ENCODE measurements at regions of chr9 and their contacts with region 1.

Region 1: GRCh38 chr9:112203536-112203935 is 28.4 kb upstream of the SUSD1 start:
- DNase-seq: no peak
- ATAC-seq: no peak
- H3K4me3 ChIP-seq: no peak overlapping the region
- H3K27ac ChIP-seq: no peak overlapping the region
- H3K4me1 ChIP-seq: no peaks in the 10 kb centered on the region
- H3K27me3 ChIP-seq: no peaks in the 10 kb centered on the region
- CTCF ChIP-seq: no peak
- POLR2A ChIP-seq: no peak

Region 2: DNA sequence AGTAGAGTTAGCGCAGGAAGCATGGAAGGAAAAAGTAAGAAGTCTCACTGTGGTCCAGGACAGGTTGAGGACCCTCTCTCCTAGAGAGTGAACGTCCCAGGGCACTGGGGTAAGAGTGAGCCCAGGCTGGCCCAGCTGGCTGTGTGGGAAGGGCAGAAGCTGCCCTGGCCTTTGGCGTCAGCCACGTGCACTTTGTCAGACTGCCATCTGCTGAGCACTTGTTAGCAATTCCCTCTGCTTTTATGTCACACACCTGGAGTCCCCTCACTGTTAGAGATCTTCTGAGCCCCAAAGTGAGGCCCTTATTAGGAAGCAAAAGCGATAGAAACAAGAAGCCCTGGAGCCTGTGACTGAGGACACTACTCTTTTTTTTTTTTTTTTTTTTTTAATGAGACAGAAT is 227.8 kb before region 1 on chr9:
- intact Hi-C with region 1: no loop called
- DNase-seq: peak in 4 of 5 donors; percentile 22 to 66 (median 50)
- ATAC-seq: peak; percentile 58 to 80 (median 64)
- H3K4me3 ChIP-seq: no peak overlapping the region
- H3K27ac ChIP-seq: no peak overlapping the region
- H3K4me1 ChIP-seq: peaks cover 0 to 17% (median 0%) of the 10 kb centered on the region in 12 donors
- H3K27me3 ChIP-seq: no peaks in the 10 kb centered on the region
- CTCF ChIP-seq: peak in 3 of 12 donors; percentile 10 to 21 (median 12)
- POLR2A ChIP-seq: no peak

Region 3: DNA sequence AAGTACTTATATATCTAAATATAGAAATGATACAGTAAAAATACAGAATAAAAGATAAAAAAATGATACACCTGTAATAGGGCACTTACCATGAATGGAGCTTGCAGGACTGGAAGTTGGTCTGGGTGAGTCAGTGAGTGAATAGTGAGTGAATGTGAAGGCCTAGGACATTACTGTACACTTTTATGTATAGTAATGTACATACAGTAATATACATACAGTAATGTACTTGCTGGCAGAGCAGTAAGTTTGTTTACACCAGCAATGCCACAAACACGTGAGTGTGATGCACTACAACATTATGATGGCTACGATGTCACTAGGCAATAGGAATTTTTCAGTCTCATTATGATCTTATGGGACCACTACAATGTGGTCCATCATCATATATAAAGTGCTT is 62.6 kb before region 1 on chr9:
- intact Hi-C with region 1: loop called in 1 of 10 experiments (anchors 10 kb)
- DNase-seq: no peak
- ATAC-seq: no peak
- H3K4me3 ChIP-seq: no peak overlapping the region
- H3K27ac ChIP-seq: no peak overlapping the region
- H3K4me1 ChIP-seq: no peaks in the 10 kb centered on the region
- H3K27me3 ChIP-seq: no peaks in the 10 kb centered on the region
- CTCF ChIP-seq: no peak
- POLR2A ChIP-seq: no peak

Region 4: DNA sequence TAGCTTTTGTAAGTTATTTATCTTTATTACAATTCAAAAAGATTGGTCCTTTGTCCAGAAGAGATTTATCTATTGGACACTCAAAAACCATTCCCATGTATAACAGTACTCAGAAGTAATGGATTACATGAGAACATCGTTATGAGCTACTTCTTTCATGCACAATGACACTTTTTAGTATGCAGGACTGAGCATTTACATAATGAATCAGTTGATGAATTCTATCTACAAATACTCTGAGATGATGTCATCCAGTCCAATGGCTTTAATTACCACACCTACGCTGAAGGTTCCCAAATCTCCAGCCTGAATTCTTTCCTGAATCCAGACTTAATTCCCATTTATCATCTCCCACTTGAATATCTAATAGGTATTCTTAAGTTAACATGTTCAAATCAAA is 54.6 kb after region 1 on chr9:
- intact Hi-C with region 1: loop called in 1 of 10 experiments (anchors 5 kb)
- DNase-seq: no peak
- ATAC-seq: no peak
- H3K4me3 ChIP-seq: no peak overlapping the region
- H3K27ac ChIP-seq: no peak overlapping the region
- H3K4me1 ChIP-seq: peaks cover 0 to 5% (median 0%) of the 10 kb centered on the region in 12 donors
- H3K27me3 ChIP-seq: no peaks in the 10 kb centered on the region
- CTCF ChIP-seq: no peak
- POLR2A ChIP-seq: no peak

Region 5: GRCh38 chr9:112271466-112272092 is 68.0 kb after region 1 on chr9:
- intact Hi-C with region 1: no loop called
- DNase-seq: no peak
- ATAC-seq: no peak
- H3K4me3 ChIP-seq: no peak overlapping the region
- H3K27ac ChIP-seq: no peak overlapping the region
- H3K4me1 ChIP-seq: peaks cover 0 to 26% (median 4%) of the 10 kb centered on the region in 12 donors
- H3K27me3 ChIP-seq: no peaks in the 10 kb centered on the region
- CTCF ChIP-seq: no peak
- POLR2A ChIP-seq: no peak

Measured in heart left ventricle (tissue), 16 donors.